Ovary (tissue), 10 donors: ENCODE measurements at regions of chr16 and their contacts with region 1.

Region 1: GRCh38 chr16:54312502-54312991 is 26.0 kb upstream of the IRX3 start:
- DNase-seq: no peak
- H3K4me3 ChIP-seq: no peak overlapping the region
- H3K27ac ChIP-seq: no peak overlapping the region
- H3K4me1 ChIP-seq: no peaks in the 10 kb centered on the region
- H3K27me3 ChIP-seq: no peaks in the 10 kb centered on the region
- CTCF ChIP-seq: no peak
- EP300 ChIP-seq: no peak
- POLR2A ChIP-seq: no peak

Region 2: GRCh38 chr16:53541326-53541725 is 771.2 kb before region 1 on chr16:
- intact Hi-C with region 1: loop called in 1 of 4 experiments (anchors 5 kb)
- DNase-seq: no peak
- H3K4me3 ChIP-seq: no peak overlapping the region
- H3K27ac ChIP-seq: no peak overlapping the region
- H3K4me1 ChIP-seq: no peaks in the 10 kb centered on the region
- H3K27me3 ChIP-seq: no peaks in the 10 kb centered on the region
- CTCF ChIP-seq: no peak
- EP300 ChIP-seq: no peak
- POLR2A ChIP-seq: no peak

Region 3: GRCh38 chr16:54165174-54165911 is 147.2 kb before region 1 on chr16:
- intact Hi-C with region 1: no loop called
- DNase-seq: no peak
- H3K4me3 ChIP-seq: no peak overlapping the region
- H3K27ac ChIP-seq: no peak overlapping the region
- H3K4me1 ChIP-seq: no peaks in the 10 kb centered on the region
- H3K27me3 ChIP-seq: no peaks in the 10 kb centered on the region
- CTCF ChIP-seq: no peak
- EP300 ChIP-seq: no peak
- POLR2A ChIP-seq: no peak

Region 4: GRCh38 chr16:54879681-54880080 is 567.1 kb after region 1 on chr16:
- intact Hi-C with region 1: no loop called
- DNase-seq: no peak
- H3K4me3 ChIP-seq: no peak overlapping the region
- H3K27ac ChIP-seq: no peak overlapping the region
- H3K4me1 ChIP-seq: no peaks in the 10 kb centered on the region
- H3K27me3 ChIP-seq: no peaks in the 10 kb centered on the region
- CTCF ChIP-seq: no peak
- EP300 ChIP-seq: no peak
- POLR2A ChIP-seq: no peak